ENCODE measurements at regions of chr15 and their contacts with region 1.

Region 1: GRCh38 chr15:92903941-92904831 is 4.1 kb downstream of the CHD2 start:
- DNase-seq: peak; percentile 90
- H3K4me3 ChIP-seq: peak overlapping the region; percentile 43
- H3K27me3 ChIP-seq: no peaks in the 10 kb centered on the region
- CTCF ChIP-seq: no peak

Region 2: GRCh38 chr15:92745845-92746271 is 158.3 kb before region 1 on chr15:
- CTCF ChIA-PET with region 1: no interaction called
- POLR2A ChIA-PET with region 1: no interaction called
- DNase-seq: no peak
- H3K4me3 ChIP-seq: no peak overlapping the region
- H3K27me3 ChIP-seq: no peaks in the 10 kb centered on the region
- CTCF ChIP-seq: no peak

Region 3: DNA sequence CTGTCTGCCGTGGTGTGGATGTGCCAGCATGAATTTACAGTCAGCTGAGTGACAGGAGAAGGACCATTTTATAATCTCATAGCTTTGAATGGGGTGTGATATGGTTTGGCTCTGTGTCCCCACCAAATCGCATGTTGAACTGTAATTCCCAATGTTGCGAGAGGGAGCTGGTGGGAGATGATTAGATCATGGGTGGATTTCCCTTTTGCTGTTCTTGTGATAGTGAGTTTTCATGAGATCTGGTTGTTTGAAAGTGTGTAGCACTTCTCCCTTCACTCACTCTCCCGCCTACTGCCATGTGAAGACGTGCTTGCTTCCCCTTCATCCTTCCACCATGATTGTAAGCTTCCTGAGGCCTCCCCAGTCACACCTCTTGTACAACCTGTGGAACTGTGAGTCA is 116.0 kb before region 1 on chr15:
- CTCF ChIA-PET with region 1: no interaction called
- POLR2A ChIA-PET with region 1: no interaction called
- DNase-seq: no peak
- H3K4me3 ChIP-seq: no peak overlapping the region
- H3K27me3 ChIP-seq: no peaks in the 10 kb centered on the region
- CTCF ChIP-seq: no peak

Region 4: DNA sequence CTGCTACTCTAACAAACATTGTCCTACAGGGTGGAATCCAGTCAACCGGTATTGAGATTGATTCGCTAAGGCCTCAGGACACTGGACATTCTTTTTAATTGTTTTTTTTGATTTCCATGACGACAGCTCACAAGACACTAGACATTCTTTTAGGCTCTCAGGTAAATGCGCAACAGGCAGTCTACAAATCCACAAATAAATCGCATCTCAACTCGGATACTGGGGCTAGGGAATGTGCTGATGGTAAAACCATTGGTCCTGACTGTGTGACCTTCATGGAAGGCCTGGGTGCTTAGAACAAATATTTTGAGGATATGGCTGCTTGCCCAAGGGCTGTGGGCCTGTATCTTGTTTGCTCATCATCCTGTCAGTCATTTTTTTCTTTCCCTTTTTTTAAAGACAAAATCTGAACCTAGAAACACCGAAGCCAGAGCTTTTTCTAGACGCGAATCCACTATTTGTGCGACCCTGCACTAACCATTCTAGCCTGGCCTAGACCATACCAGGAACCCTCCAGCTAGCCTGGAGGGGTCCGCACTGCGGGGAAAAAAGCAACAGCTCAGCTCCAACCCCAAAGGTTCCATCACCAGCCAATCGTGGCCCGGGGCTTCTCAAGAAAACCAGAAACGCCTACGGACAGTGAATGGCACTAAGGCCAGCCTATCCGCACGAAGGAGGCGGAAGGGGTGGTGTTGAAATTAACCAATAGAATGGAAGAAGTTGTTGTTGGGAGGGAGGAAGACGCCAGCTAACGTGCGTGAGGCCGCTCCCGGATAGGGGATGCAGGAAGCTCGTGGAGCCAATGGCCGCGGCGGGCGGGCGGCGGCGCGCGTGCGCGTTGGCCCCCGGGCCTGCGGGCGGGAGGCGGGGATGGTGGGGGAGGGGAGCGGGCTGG is 22.1 kb before region 1 on chr15:
- CTCF ChIA-PET with region 1: interaction called, 5 read pairs
- POLR2A ChIA-PET with region 1: interaction called, 16 read pairs
- DNase-seq: peak; percentile 99
- H3K4me3 ChIP-seq: peak overlapping the region; percentile 28
- H3K27me3 ChIP-seq: no peaks in the 10 kb centered on the region
- CTCF ChIP-seq: no peak

Region 5: DNA sequence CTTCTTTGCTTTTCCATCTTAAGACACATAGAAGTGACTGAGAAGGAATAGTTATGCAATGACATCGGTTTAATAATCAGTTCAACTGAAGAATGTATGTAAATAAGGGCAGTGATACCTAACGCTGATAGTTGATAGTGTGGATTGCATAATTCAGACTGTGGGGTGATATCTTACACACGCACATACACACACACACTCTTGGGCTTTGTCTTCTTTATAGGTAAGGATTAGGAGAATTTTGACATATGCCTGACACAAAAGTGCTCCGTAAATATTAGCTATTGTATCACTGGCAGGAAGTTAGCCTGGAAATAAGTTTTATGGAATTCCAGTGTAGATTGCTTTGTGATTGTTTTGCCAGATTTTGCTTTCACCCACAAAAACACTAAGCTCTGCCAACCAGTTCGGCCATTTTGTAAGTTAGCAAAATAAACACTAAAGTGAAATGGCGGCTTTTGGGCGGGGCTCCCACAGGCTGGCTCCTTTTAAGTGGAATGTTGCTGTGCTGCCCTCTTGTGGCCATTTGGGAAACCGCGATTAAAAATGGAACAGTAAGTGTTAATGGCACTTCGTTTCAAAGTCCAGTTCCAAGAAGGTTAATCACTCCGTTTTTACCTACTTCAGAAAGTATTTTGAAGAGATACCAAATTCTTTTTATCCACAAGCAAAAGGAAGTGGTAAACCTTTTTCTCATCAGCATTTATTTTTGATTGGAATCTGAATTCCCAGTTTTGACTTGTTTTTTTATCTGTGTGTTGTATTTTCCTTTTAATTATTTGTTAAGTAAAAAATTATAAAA is 13.6 kb after region 1 on chr15:
- CTCF ChIA-PET with region 1: interaction called, 36 read pairs
- POLR2A ChIA-PET with region 1: interaction called, 3 read pairs
- DNase-seq: peak; percentile 60
- H3K4me3 ChIP-seq: no peak overlapping the region
- H3K27me3 ChIP-seq: no peaks in the 10 kb centered on the region
- CTCF ChIP-seq: peak; percentile 83

Region 6: DNA sequence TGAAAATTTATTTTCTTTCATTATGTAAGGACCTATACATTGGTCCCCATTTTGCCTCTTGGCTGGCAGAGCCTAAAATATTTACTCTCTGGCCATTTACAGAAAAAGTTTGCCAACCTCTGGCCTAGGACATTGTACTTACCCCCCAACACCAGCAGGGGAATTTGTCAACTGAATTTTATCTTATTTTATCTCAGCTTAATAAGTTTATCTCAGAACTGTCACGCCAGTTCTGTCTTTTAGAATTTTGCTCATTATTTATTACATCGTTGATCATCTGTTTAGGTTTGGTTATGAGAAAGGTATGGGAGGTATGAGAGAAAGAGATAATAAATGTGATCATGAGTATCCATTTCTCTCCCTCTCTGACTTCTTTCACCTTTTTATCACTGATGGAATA is 34.2 kb after region 1 on chr15:
- CTCF ChIA-PET with region 1: no interaction called
- POLR2A ChIA-PET with region 1: no interaction called
- DNase-seq: no peak
- H3K4me3 ChIP-seq: no peak overlapping the region
- H3K27me3 ChIP-seq: no peaks in the 10 kb centered on the region
- CTCF ChIP-seq: peak; percentile 24

Region 7: DNA sequence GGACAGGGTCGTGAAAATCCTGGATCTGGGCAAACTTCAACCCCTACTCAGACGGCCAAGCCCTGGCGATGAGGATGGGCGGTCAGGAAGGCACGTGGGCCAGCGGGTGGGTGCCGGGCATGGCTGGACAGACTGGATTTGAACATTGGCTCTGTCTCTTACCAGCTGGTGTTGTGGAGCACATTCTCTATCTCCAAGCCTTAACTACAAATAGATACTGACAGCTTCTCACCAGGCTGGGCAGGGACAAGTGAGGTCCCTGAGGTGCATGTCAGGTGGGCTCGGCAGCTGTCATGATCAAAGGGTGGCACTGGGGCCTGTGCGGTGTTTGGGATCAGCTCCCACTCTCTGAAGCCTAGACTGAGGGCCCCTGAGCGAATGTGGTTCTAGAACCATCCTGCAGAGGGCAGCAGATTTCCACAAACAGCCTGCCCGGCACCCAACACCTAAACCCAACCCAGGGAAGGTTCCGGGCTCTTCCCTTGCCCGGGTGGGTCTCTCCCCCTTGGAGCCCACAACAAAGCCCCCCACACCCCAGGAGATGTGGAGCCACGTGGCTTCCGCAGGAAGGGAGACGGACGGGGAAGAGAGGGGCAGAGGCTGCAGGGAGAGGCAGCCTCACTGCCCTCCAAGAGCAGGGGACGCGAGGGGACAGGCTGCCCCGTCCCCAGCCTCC is 126.4 kb after region 1 on chr15:
- CTCF ChIA-PET with region 1: no interaction called
- POLR2A ChIA-PET with region 1: no interaction called
- DNase-seq: no peak
- H3K4me3 ChIP-seq: no peak overlapping the region
- H3K27me3 ChIP-seq: no peaks in the 10 kb centered on the region
- CTCF ChIP-seq: peak; percentile 84